ENCODE measurements at regions of chr16 and their contacts with region 1.

Region 1: GRCh38 chr16:65121870-65122723 is at the start of gene CDH11:
- DNase-seq: peak; percentile 85
- H3K4me3 ChIP-seq: peak within 1 kb of the TSS; percentile 38 to 74 (median 49)
- H3K27ac ChIP-seq: peak within 1 kb of the TSS; percentile 82 to 97 (median 90)
- H3K4me1 ChIP-seq: peaks cover 0 to 43% (median 15%) of the 10 kb centered on the region in 6 donors
- H3K27me3 ChIP-seq: peaks cover 0 to 62% (median 36%) of the 10 kb centered on the region in 7 donors
- CTCF ChIP-seq: peak in 4 of 11 experiments; percentile 24 to 50 (median 44)
- POLR2A ChIP-seq: peak in 1 of 3 donors; percentile 47
- total RNA-seq, gene CDH11: 214 to 721 (median 462) TPM

Region 2: GRCh38 chr16:64667334-64667877 is 454.7 kb before region 1 on chr16:
- intact Hi-C with region 1: no loop called
- DNase-seq: no peak
- H3K4me3 ChIP-seq: no peak overlapping the region
- H3K27ac ChIP-seq: no peak overlapping the region
- H3K4me1 ChIP-seq: no peaks in the 10 kb centered on the region
- H3K27me3 ChIP-seq: no peaks in the 10 kb centered on the region
- CTCF ChIP-seq: no peak
- POLR2A ChIP-seq: no peak

Region 3: GRCh38 chr16:65070831-65071432 is 51.2 kb before region 1 on chr16:
- intact Hi-C with region 1: no loop called
- DNase-seq: no peak
- H3K4me3 ChIP-seq: no peak overlapping the region
- H3K27ac ChIP-seq: peak overlapping the region in 5 of 8 donors; percentile 12 to 53 (median 40)
- H3K4me1 ChIP-seq: peaks cover 0 to 40% (median 22%) of the 10 kb centered on the region in 6 donors
- H3K27me3 ChIP-seq: no peaks in the 10 kb centered on the region
- CTCF ChIP-seq: no peak
- POLR2A ChIP-seq: no peak

Region 4: GRCh38 chr16:65176603-65177002 is 54.5 kb after region 1 on chr16:
- intact Hi-C with region 1: no loop called
- DNase-seq: no peak
- H3K4me3 ChIP-seq: no peak overlapping the region
- H3K27ac ChIP-seq: no peak overlapping the region
- H3K4me1 ChIP-seq: peaks cover 0 to 3% (median 0%) of the 10 kb centered on the region in 6 donors
- H3K27me3 ChIP-seq: no peaks in the 10 kb centered on the region
- CTCF ChIP-seq: no peak
- POLR2A ChIP-seq: no peak

Region 5: DNA sequence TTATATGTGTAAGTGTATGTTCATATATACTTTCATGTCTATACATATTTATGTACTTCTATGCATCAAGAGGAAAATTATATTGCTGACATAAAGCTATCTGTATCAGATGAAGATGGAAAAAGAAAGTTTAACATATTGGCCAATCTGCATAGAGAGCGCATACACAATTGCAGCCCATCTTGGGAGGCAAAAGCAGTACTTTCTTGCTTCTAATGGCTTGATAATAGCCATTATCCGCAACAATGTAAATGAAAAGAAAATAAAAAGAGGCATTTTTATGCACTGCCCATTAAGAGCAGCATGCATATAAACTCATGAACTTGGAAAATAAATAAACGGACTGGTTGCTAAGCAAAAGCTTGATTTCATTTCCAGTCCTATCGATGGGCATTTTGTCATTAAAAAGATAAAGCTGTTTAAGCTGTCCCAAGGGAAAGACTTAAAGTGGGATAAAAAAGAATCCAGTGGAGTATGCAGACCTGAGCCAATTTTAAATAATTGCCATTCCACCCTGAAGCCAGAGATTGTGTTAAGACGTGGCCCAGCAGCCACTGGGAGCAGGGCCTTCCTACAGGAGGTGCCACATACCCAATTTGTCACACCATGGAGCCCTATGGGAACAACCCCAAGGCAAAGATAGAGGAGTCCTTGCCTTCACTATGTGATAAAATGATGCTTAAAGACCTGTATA is 183.3 kb after region 1 on chr16:
- intact Hi-C with region 1: loop called (anchors 10 kb)
- DNase-seq: no peak
- H3K4me3 ChIP-seq: no peak overlapping the region
- H3K27ac ChIP-seq: no peak overlapping the region
- H3K4me1 ChIP-seq: no peaks in the 10 kb centered on the region
- H3K27me3 ChIP-seq: no peaks in the 10 kb centered on the region
- CTCF ChIP-seq: no peak
- POLR2A ChIP-seq: no peak